Heart right ventricle (tissue), 16 donors: ENCODE measurements at regions of chr12 and their contacts with region 1.

Region 1: DNA sequence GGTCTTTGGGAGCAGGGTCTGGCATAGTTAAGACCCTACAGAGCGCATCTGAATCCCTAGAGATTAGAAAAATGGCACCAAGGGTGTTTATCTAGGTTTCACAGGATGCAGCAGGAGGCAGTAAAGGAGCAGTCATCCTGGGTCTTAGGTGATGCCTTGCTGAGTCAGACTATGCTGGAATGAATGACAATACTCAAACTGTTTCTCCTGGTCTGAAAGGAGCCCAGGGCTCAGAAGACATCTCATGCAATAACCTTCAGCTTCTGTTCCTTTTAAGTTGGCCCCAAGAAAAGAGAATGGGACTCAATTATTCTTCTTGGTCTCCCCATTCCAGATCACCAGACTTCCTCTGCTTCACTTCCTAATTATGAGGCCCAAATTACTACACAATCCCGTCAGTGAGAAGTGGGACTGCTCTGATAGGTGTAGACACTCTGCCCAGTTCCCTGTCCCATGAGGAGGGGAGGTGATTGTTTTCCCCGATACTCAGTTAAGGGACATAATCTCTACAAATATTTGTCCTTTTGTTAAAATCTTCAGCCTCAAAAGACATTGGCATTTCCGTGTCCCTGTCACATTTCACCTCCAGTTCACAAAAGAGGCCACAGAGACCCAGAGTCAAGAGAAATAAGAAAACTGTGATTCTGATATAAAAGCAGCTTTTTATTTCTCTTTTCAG is 14.8 kb upstream of the APOF start:
- DNase-seq: no peak
- ATAC-seq: no peak
- H3K4me3 ChIP-seq: no peak overlapping the region
- H3K27ac ChIP-seq: no peak overlapping the region
- H3K4me1 ChIP-seq: peaks cover 0 to 10% (median 0%) of the 10 kb centered on the region in 9 donors
- H3K27me3 ChIP-seq: no peaks in the 10 kb centered on the region
- CTCF ChIP-seq: no peak

Region 2: GRCh38 chr12:55874443-55874842 is 503.0 kb before region 1 on chr12:
- intact Hi-C with region 1: no loop called
- DNase-seq: no peak
- ATAC-seq: no peak
- H3K4me3 ChIP-seq: no peak overlapping the region
- H3K27ac ChIP-seq: no peak overlapping the region
- H3K4me1 ChIP-seq: no peaks in the 10 kb centered on the region
- H3K27me3 ChIP-seq: no peaks in the 10 kb centered on the region
- CTCF ChIP-seq: no peak

Region 3: GRCh38 chr12:56437430-56438176 is 60.2 kb after region 1 on chr12:
- intact Hi-C with region 1: loop called in 2 of 10 experiments (anchors 5 to 10 kb)
- DNase-seq: no peak
- ATAC-seq: no peak
- H3K4me3 ChIP-seq: no peak overlapping the region
- H3K27ac ChIP-seq: no peak overlapping the region
- H3K4me1 ChIP-seq: no peaks in the 10 kb centered on the region
- H3K27me3 ChIP-seq: no peaks in the 10 kb centered on the region
- CTCF ChIP-seq: no peak

Region 4: DNA sequence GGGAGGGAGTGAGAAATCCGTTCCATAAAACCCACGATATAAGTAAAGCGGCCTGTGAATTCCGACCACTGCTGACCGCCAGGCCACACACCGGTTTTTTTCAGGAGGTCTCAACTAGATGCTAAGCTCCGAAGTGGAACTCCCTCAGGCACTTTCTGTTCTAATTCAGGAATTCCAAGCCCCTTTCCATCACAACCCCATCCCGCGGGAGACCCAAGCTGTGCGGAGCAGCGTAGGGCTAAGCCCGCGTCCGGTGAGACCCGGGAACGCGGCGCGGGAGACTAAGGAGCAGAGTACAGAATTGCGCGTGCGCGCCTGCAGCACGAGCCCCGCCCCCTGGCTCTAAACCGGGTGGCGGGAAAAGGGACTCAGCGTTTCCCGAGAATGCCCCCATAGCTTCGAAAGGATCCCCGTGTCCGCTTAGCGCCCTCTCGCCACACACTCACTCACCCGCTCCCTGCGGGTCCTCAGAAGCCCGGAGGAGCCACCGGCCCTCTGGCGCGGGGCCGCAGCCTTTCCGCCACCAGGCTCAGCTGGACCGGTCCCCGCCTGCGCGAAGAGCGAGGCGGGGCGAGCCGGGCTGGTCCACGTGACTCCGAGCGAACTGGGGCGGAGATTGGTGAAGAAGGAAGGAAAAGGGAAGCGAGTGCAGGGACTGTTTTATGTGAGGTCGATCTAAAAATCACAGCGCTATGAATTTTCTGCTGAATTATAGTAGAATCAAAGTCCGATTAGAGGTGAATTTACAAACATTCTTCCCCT is 71.6 kb after region 1 on chr12 and contains the start of gene TIMELESS:
- intact Hi-C with region 1: loop called in 1 of 10 experiments (anchors 10 kb)
- DNase-seq: peak; percentile 86 to 90
- ATAC-seq: peak; percentile 98 to 99 (median 99)
- H3K4me3 ChIP-seq: peak within 1 kb of the TSS; percentile 52 to 83 (median 72)
- H3K27ac ChIP-seq: peak within 1 kb of the TSS; percentile 15 to 92 (median 86)
- H3K4me1 ChIP-seq: peaks cover 0 to 20% (median 11%) of the 10 kb centered on the region in 9 donors
- H3K27me3 ChIP-seq: no peaks in the 10 kb centered on the region
- CTCF ChIP-seq: peak in 2 of 9 donors; percentile 14 to 25
- total RNA-seq, gene TIMELESS: 1.0 to 5.2 (median 2.0) TPM